CD8-positive, alpha-beta memory T cell (primary cell): ENCODE measurements at regions of chr10 and their contacts with region 1.

Region 1: GRCh38 chr10:22615819-22616499 is 98.4 kb downstream of the PIP4K2A start:
- DNase-seq: peak in 4 of 5 donors; percentile 33 to 80 (median 52)
- H3K4me3 ChIP-seq: peak overlapping the region; percentile 37
- H3K4me3 Mint-ChIP-seq: peak overlapping the region; percentile 65 to 82 (median 76)
- H3K27ac ChIP-seq: peak overlapping the region; percentile 66
- H3K27ac Mint-ChIP-seq: peak overlapping the region; percentile 83 to 100 (median 97)
- H3K4me1 ChIP-seq: peaks cover 92% of the 10 kb centered on the region
- H3K4me1 Mint-ChIP-seq: peaks cover 97 to 100% (median 100%) of the 10 kb centered on the region in 3 donors
- H3K27me3 ChIP-seq: no peaks in the 10 kb centered on the region
- H3K27me3 Mint-ChIP-seq: peaks cover 0 to 2% of the 10 kb centered on the region in 2 donors

Region 2: DNA sequence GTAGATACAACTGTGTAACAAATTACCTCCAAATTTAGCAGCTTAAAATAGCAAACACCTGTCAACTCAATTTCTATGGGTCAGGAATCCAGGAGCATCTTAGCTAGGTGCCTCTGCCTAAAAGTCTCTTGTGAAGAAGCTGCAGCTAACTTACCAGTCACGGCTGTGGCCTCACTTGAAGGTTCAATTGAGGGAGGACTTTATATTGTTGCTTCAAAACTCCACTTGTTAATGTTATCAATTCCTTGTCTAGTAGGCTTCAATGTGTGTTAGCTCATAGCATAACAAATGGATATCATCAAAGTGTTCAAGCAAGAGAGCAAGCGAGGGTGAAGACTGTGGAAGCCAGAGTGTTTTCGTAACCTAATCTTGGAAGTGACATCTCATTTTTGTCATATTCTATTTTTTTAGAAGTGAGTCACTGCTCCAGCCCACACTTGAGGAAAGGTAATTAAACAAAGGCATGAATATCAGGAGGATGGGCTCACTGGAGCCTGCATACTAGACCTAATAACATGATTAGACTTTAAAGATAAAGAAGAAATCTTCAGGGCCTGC is 97.7 kb before region 1 on chr10:
- CTCF ChIA-PET with region 1: no interaction called
- POLR2A ChIA-PET with region 1: no interaction called
- DNase-seq: no peak
- H3K4me3 ChIP-seq: no peak overlapping the region
- H3K4me3 Mint-ChIP-seq: no peak overlapping the region
- H3K27ac ChIP-seq: no peak overlapping the region
- H3K27ac Mint-ChIP-seq: no peak overlapping the region
- H3K4me1 ChIP-seq: no peaks in the 10 kb centered on the region
- H3K4me1 Mint-ChIP-seq: no peaks in the 10 kb centered on the region
- H3K27me3 ChIP-seq: no peaks in the 10 kb centered on the region
- H3K27me3 Mint-ChIP-seq: peaks cover 11 to 15% of the 10 kb centered on the region in 2 donors

Region 3: DNA sequence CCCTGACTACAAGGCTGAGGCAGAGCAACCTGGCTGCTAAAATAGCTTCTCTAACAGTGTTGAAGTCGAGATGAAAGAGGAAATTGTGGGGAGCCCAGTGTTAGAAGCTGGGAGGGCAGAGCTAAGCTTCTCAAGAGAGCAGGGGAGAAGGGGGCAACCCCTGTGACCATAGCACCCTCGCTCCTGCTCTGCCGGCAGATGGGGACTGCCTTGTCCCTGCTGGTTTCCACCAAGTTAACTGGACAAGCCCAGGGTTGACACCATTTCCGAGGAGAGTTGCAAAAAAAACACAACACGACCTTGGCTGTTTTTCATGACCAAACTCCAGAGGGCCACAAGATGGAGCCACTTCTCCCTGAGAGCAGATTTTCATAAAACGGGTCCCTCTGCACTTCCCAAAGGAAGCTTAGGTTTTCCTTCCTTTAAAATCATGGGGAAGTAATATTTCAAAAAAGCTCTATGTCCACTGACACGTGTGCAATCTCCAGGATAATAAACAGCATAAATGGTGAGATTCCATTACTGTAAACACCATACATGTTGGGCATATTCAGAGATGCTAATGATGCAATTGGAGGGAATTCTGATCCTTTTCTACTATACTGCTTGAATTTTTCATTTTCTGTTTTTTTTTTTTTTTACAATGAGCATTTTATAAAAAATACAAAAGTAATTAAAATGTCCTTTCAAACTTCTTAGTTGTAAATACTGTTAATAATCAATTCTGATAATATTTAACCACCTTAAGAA is 42.0 kb before region 1 on chr10:
- CTCF ChIA-PET with region 1: interaction called, 12 read pairs
- POLR2A ChIA-PET with region 1: no interaction called
- DNase-seq: peak in 4 of 5 donors; percentile 3 to 64 (median 40)
- H3K4me3 ChIP-seq: no peak overlapping the region
- H3K4me3 Mint-ChIP-seq: peak overlapping the region; percentile 4 to 82 (median 58)
- H3K27ac ChIP-seq: peak overlapping the region; percentile 35
- H3K27ac Mint-ChIP-seq: peak overlapping the region; percentile 68 to 96 (median 90)
- H3K4me1 ChIP-seq: peaks cover 33% of the 10 kb centered on the region
- H3K4me1 Mint-ChIP-seq: peaks cover 66 to 89% (median 87%) of the 10 kb centered on the region in 3 donors
- H3K27me3 ChIP-seq: no peaks in the 10 kb centered on the region
- H3K27me3 Mint-ChIP-seq: no peaks in the 10 kb centered on the region

Region 4: DNA sequence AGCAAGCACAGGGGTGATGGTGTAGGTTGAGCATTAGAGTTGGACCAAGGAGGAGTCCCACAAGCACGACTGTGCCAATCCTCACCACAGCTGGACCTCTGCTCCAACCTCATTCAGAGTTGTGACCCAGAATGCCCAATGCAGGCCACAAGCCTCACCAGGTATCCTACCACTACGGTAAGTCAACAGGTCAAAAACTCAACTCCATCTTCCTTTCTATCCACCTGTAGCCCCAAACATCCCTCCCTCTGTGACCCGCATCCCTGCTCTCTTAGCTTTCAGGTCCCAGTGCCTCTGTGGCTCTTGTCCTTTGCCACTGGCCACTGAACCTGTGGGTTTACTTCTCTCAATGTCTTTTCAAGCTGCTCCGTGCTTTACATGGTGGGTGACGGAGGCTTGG is 14.3 kb before region 1 on chr10:
- CTCF ChIA-PET with region 1: interaction called, 5 read pairs
- POLR2A ChIA-PET with region 1: interaction called, 11 read pairs
- DNase-seq: no peak
- H3K4me3 ChIP-seq: peak overlapping the region; percentile 34
- H3K4me3 Mint-ChIP-seq: peak overlapping the region; percentile 67 to 88 (median 71)
- H3K27ac ChIP-seq: peak overlapping the region; percentile 41
- H3K27ac Mint-ChIP-seq: peak overlapping the region; percentile 85 to 99 (median 93)
- H3K4me1 ChIP-seq: peaks cover 96% of the 10 kb centered on the region
- H3K4me1 Mint-ChIP-seq: peaks cover 92 to 98% (median 98%) of the 10 kb centered on the region in 3 donors
- H3K27me3 ChIP-seq: no peaks in the 10 kb centered on the region
- H3K27me3 Mint-ChIP-seq: no peaks in the 10 kb centered on the region

Region 5: GRCh38 chr10:22630234-22631174 is 14.5 kb after region 1 on chr10:
- CTCF ChIA-PET with region 1: interaction called, 13 read pairs
- POLR2A ChIA-PET with region 1: interaction called, 10 read pairs
- DNase-seq: peak in 4 of 5 donors; percentile 36 to 71 (median 62)
- H3K4me3 ChIP-seq: peak overlapping the region; percentile 19
- H3K4me3 Mint-ChIP-seq: peak overlapping the region; percentile 13 to 85 (median 82)
- H3K27ac ChIP-seq: peak overlapping the region; percentile 75
- H3K27ac Mint-ChIP-seq: peak overlapping the region; percentile 86 to 99 (median 98)
- H3K4me1 ChIP-seq: peaks cover 99% of the 10 kb centered on the region
- H3K4me1 Mint-ChIP-seq: peaks cover 95 to 99% (median 98%) of the 10 kb centered on the region in 3 donors
- H3K27me3 ChIP-seq: no peaks in the 10 kb centered on the region
- H3K27me3 Mint-ChIP-seq: no peaks in the 10 kb centered on the region